ENCODE measurements at regions of chr10 and their contacts with region 1.

Region 1: DNA sequence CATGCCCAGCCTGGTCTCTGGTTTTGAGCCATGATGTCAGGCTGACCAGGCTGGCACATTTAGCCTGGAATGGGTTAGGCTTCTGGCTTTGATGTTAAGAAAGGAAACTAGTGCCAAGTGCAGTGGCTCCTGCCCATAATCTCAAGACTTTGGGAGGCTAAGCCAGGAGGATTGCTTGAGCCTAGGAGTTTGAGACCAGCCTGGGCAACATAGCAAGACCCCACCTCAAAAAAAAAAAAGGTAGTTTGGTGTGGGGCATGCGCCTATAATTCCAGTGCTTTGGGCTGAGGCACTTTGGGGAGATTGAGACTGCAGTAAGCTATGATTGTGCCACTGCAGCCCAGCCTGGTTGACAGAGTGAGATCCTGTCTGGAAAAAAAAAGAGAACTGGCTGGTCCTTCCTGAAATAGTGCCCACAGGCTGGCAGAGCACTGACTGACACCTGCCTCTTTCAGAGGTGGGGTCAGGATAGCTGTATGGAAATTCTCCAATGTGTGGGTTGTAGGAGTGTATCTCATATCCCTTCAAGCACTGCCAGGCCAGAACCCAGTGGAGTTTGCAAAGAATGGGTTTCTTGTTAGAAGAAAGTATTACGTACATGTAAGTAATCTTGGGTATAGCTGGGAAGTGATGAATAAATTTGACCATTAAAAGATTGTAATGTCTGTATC is 61.3 kb downstream of the KAT6B start:
- DNase-seq: no peak
- H3K4me3 ChIP-seq: no peak overlapping the region
- H3K27ac ChIP-seq: no peak overlapping the region
- H3K4me1 ChIP-seq: no peaks in the 10 kb centered on the region
- H3K27me3 ChIP-seq: no peaks in the 10 kb centered on the region
- CTCF ChIP-seq: no peak

Region 2: GRCh38 chr10:74406006-74406405 is 481.7 kb before region 1 on chr10:
- CTCF ChIA-PET with region 1: interaction called, 10 read pairs
- POLR2A ChIA-PET with region 1: no interaction called
- intact Hi-C with region 1: no loop called
- DNase-seq: no peak
- H3K4me3 ChIP-seq: no peak overlapping the region
- H3K27ac ChIP-seq: no peak overlapping the region
- H3K4me1 ChIP-seq: no peaks in the 10 kb centered on the region
- H3K27me3 ChIP-seq: no peaks in the 10 kb centered on the region
- CTCF ChIP-seq: no peak

Region 3: GRCh38 chr10:74867351-74867750 is 20.4 kb before region 1 on chr10:
- CTCF ChIA-PET with region 1: no interaction called
- POLR2A ChIA-PET with region 1: no interaction called
- intact Hi-C with region 1: no loop called
- DNase-seq: no peak
- H3K4me3 ChIP-seq: no peak overlapping the region
- H3K27ac ChIP-seq: no peak overlapping the region
- H3K4me1 ChIP-seq: no peaks in the 10 kb centered on the region
- H3K27me3 ChIP-seq: no peaks in the 10 kb centered on the region
- CTCF ChIP-seq: no peak

Region 4: GRCh38 chr10:74932648-74933047 is 44.9 kb after region 1 on chr10:
- CTCF ChIA-PET with region 1: no interaction called
- POLR2A ChIA-PET with region 1: no interaction called
- intact Hi-C with region 1: no loop called
- DNase-seq: no peak
- H3K4me3 ChIP-seq: no peak overlapping the region
- H3K27ac ChIP-seq: no peak overlapping the region
- H3K4me1 ChIP-seq: peaks cover 16% of the 10 kb centered on the region
- H3K27me3 ChIP-seq: no peaks in the 10 kb centered on the region
- CTCF ChIP-seq: no peak